Activated CD4-positive, alpha-beta T cell treated with anti-CD3 and anti-CD28 coated beads for 36 hours (primary cell): ENCODE measurements at regions of chr6 and their contacts with region 1.

Region 1: DNA sequence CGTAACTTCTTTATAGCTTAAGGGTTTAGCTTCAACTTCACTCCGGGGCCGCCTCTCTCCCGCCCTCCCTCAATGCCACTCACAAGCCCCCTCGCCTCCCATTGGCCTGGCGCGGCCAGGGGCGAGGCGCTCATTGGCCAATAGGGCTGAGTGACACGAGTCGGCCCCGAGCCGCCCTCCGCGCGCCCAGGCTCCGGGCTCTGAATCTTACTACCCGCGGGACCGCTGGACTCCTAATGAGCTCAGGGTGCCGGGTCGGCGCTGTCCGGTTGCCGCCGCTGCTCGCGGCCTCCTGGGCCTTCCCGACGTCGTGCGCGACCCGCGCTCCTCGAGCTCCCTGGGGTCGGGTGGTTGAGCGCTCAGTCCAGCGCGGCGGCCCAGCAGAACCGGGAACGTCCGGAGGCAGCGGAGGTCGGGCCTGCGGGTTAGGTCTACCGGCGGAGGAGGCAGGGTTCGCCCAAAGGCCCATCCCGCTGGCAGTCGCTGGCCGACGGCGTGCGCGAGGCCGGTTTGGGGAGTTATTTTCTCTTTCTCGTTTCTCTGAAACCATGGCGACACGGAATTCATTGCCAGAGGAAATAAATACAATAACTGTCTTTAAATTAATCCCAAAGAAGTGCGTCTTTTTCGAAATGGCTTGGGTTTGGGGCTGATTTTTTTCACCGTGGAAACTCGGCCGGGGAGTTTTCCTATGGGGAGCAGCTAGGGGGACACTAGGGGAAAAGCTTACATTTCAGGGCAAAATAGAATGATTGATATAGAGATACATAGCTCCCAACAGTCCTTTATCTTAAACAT is at the start of gene SIM1:
- DNase-seq: peak; percentile 43
- ATAC-seq: peak; percentile 81
- H3K4me3 Mint-ChIP-seq: peak within 1 kb of the TSS; percentile 33
- H3K27ac Mint-ChIP-seq: peak within 1 kb of the TSS; percentile 10
- H3K4me1 Mint-ChIP-seq: peaks cover 27% of the 10 kb centered on the region
- H3K27me3 Mint-ChIP-seq: peaks cover 75% of the 10 kb centered on the region
- total RNA-seq, gene SIM1: not detected

Region 2: GRCh38 chr6:98834060-98835031 is 1630.8 kb before region 1 on chr6 and contains the start of gene POU3F2:
- CTCF ChIA-PET with region 1: no interaction called
- POLR2A ChIA-PET with region 1: no interaction called
- intact Hi-C with region 1: loop called in 1 of 2 experiments (anchors 10 kb)
- DNase-seq: peak; percentile 85
- ATAC-seq: peak; percentile 85
- H3K4me3 Mint-ChIP-seq: peak within 1 kb of the TSS; percentile 75
- H3K27ac Mint-ChIP-seq: no peak within 1 kb of the TSS
- H3K4me1 Mint-ChIP-seq: peaks cover 43% of the 10 kb centered on the region
- H3K27me3 Mint-ChIP-seq: peaks cover 64% of the 10 kb centered on the region
- total RNA-seq, gene POU3F2: not detected

Region 3: GRCh38 chr6:99603421-99604165 is 861.5 kb before region 1 on chr6:
- CTCF ChIA-PET with region 1: no interaction called
- POLR2A ChIA-PET with region 1: no interaction called
- intact Hi-C with region 1: loop called (anchors 2 to 5 kb)
- DNase-seq: peak; percentile 56
- ATAC-seq: peak; percentile 51
- H3K4me3 Mint-ChIP-seq: peak overlapping the region; percentile 51
- H3K27ac Mint-ChIP-seq: no peak overlapping the region
- H3K4me1 Mint-ChIP-seq: peaks cover 30% of the 10 kb centered on the region
- H3K27me3 Mint-ChIP-seq: peaks cover 79% of the 10 kb centered on the region

Region 4: DNA sequence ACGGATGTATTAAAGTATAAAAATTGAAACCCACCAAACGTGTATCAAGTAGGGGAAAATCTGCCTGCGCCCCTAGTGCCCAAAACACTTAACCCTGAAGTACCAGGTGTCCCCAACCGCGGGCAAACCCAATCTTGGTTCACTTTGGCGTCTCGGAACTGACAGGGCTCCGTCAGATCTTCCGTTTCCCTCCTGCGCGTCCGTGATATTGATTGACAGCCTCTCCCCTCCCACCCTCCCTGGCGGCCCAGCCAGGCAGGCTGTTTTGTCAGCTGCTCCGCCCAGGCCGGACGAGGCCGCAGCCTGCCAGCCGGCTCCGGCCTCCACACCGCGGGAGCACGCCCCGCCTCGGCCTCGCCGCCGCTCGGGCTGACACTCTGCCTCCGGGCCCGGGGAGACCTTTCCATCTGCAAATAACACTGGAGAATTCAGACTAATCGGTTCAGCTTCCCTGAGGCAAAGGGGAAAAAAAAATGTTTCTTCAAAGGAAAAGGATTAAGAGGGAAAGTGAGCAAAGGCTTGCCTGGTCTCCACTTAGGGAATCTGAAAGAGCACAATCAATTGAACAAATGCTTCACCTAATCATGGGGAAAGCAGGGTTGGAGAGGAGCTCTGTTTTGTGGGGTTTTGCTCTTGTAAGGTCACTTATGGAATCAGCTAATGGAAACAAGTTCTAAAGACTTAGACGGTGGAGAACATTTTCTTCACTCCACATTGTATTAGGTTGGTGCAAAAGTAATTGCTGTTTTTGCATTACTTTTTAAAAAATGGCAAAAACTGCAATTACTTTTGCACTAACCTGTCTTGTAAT is 236.1 kb before region 1 on chr6:
- CTCF ChIA-PET with region 1: no interaction called
- POLR2A ChIA-PET with region 1: no interaction called
- intact Hi-C with region 1: loop called (anchors 5 to 10 kb)
- DNase-seq: peak; percentile 72
- ATAC-seq: peak; percentile 83
- H3K4me3 Mint-ChIP-seq: peak overlapping the region; percentile 51
- H3K27ac Mint-ChIP-seq: peak overlapping the region; percentile 63
- H3K4me1 Mint-ChIP-seq: peaks cover 11% of the 10 kb centered on the region
- H3K27me3 Mint-ChIP-seq: peaks cover 23% of the 10 kb centered on the region

Region 5: GRCh38 chr6:100300221-100300736 is 164.8 kb before region 1 on chr6:
- CTCF ChIA-PET with region 1: no interaction called
- POLR2A ChIA-PET with region 1: no interaction called
- intact Hi-C with region 1: no loop called
- DNase-seq: no peak
- ATAC-seq: no peak
- H3K4me3 Mint-ChIP-seq: no peak overlapping the region
- H3K27ac Mint-ChIP-seq: no peak overlapping the region
- H3K4me1 Mint-ChIP-seq: no peaks in the 10 kb centered on the region
- H3K27me3 Mint-ChIP-seq: peaks cover 4% of the 10 kb centered on the region

Region 6: GRCh38 chr6:100446115-100447080 is 18.7 kb before region 1 on chr6:
- CTCF ChIA-PET with region 1: interaction called, 3 read pairs
- POLR2A ChIA-PET with region 1: no interaction called
- intact Hi-C with region 1: loop called (anchors 1 to 2 kb)
- DNase-seq: no peak
- ATAC-seq: no peak
- H3K4me3 Mint-ChIP-seq: no peak overlapping the region
- H3K27ac Mint-ChIP-seq: no peak overlapping the region
- H3K4me1 Mint-ChIP-seq: peaks cover 5% of the 10 kb centered on the region
- H3K27me3 Mint-ChIP-seq: peaks cover 52% of the 10 kb centered on the region

Region 7: GRCh38 chr6:101401792-101402621 is 936.9 kb after region 1 on chr6:
- CTCF ChIA-PET with region 1: no interaction called
- POLR2A ChIA-PET with region 1: no interaction called
- intact Hi-C with region 1: loop called (anchors 5 kb)
- DNase-seq: peak; percentile 2
- ATAC-seq: no peak
- H3K4me3 Mint-ChIP-seq: no peak overlapping the region
- H3K27ac Mint-ChIP-seq: no peak overlapping the region
- H3K4me1 Mint-ChIP-seq: no peaks in the 10 kb centered on the region
- H3K27me3 Mint-ChIP-seq: peaks cover 53% of the 10 kb centered on the region